Activated naive CD4-positive, alpha-beta T cell treated with anti-CD3 and anti-CD28 coated beads for 36 hours (primary cell): ENCODE measurements at regions of chr21 and their contacts with region 1.

Region 1: GRCh38 chr21:25421327-25422028 is 185.8 kb downstream of the MRPL39 start:
- DNase-seq: peak; percentile 86
- H3K4me3 Mint-ChIP-seq: peak overlapping the region; percentile 59
- H3K27ac Mint-ChIP-seq: peak overlapping the region; percentile 92
- H3K4me1 Mint-ChIP-seq: peaks cover 65% of the 10 kb centered on the region
- H3K27me3 Mint-ChIP-seq: no peaks in the 10 kb centered on the region

Region 2: DNA sequence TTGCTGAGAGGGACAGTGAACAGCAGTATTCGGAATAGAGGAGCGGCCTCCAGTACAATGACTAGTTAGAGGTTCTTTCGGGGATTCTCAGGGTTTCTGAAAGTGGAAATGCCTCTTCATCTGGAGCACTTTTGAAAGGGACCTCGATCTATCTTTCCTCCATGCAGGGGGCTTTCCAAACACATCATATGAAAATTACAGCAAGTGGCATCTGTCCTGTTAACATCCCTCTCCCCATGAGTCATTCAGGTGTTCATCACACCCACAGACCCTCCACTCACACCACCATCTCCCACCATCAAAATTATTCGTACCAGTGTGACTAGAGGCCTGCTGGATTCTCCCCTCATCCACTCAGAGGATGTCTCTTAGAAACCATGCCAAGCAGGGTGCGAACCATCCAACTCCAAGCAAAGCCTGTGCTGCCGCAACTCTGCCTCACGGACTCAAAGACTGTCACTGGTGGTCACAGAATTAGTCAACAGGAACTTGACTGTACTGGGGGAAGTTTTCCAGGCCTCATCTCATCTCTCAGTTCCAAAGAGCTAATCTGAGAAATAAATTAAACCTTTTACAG is 25.3 kb before region 1 on chr21:
- CTCF ChIA-PET with region 1: interaction called, 3 read pairs
- intact Hi-C with region 1: loop called (anchors 1 kb)
- DNase-seq: peak; percentile 89
- H3K4me3 Mint-ChIP-seq: peak overlapping the region; percentile 41
- H3K27ac Mint-ChIP-seq: peak overlapping the region; percentile 81
- H3K4me1 Mint-ChIP-seq: peaks cover 18% of the 10 kb centered on the region
- H3K27me3 Mint-ChIP-seq: peaks cover 2% of the 10 kb centered on the region

Region 3: GRCh38 chr21:25501996-25502665 is 80.7 kb after region 1 on chr21:
- CTCF ChIA-PET with region 1: interaction called, 17 read pairs
- intact Hi-C with region 1: loop called (anchors 1 kb)
- DNase-seq: peak; percentile 87
- H3K4me3 Mint-ChIP-seq: peak overlapping the region; percentile 53
- H3K27ac Mint-ChIP-seq: peak overlapping the region; percentile 92
- H3K4me1 Mint-ChIP-seq: peaks cover 78% of the 10 kb centered on the region
- H3K27me3 Mint-ChIP-seq: no peaks in the 10 kb centered on the region

Region 4: DNA sequence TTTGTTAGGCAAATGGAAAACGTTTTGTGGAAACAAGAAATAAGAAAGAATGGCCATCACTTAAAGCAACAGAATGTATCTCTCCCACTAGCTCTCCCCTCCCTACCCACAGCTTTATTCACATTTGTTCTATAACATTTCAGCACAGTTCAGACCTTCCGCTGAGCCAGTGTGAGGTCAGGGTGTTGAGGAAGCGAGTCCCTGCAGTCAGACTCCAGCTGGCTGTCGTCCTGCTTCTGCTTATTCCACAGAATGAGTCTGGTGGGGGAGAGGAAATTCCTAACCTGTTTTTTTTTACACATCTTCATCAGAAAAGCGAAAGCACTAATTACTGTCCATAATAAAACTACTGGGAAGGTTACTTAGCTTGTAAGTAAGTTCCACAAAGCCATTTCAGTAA is 146.8 kb after region 1 on chr21:
- CTCF ChIA-PET with region 1: interaction called, 51 read pairs
- intact Hi-C with region 1: loop called (anchors 1 kb)
- DNase-seq: no peak
- H3K4me3 Mint-ChIP-seq: peak overlapping the region; percentile 91
- H3K27ac Mint-ChIP-seq: peak overlapping the region; percentile 96
- H3K4me1 Mint-ChIP-seq: peaks cover 40% of the 10 kb centered on the region
- H3K27me3 Mint-ChIP-seq: no peaks in the 10 kb centered on the region

Region 5: GRCh38 chr21:25708467-25709065 is 287.1 kb after region 1 on chr21:
- CTCF ChIA-PET with region 1: no interaction called
- intact Hi-C with region 1: loop called (anchors 1 kb)
- DNase-seq: peak; percentile 60
- H3K4me3 Mint-ChIP-seq: no peak overlapping the region
- H3K27ac Mint-ChIP-seq: no peak overlapping the region
- H3K4me1 Mint-ChIP-seq: no peaks in the 10 kb centered on the region
- H3K27me3 Mint-ChIP-seq: no peaks in the 10 kb centered on the region

Region 6: GRCh38 chr21:25862596-25862995 is 441.1 kb after region 1 on chr21:
- CTCF ChIA-PET with region 1: no interaction called
- intact Hi-C with region 1: loop called (anchors 5 kb)
- DNase-seq: peak; percentile 49
- H3K4me3 Mint-ChIP-seq: no peak overlapping the region
- H3K27ac Mint-ChIP-seq: no peak overlapping the region
- H3K4me1 Mint-ChIP-seq: no peaks in the 10 kb centered on the region
- H3K27me3 Mint-ChIP-seq: no peaks in the 10 kb centered on the region